ENCODE measurements at regions of chr21 and their contacts with region 1.

Region 1: DNA sequence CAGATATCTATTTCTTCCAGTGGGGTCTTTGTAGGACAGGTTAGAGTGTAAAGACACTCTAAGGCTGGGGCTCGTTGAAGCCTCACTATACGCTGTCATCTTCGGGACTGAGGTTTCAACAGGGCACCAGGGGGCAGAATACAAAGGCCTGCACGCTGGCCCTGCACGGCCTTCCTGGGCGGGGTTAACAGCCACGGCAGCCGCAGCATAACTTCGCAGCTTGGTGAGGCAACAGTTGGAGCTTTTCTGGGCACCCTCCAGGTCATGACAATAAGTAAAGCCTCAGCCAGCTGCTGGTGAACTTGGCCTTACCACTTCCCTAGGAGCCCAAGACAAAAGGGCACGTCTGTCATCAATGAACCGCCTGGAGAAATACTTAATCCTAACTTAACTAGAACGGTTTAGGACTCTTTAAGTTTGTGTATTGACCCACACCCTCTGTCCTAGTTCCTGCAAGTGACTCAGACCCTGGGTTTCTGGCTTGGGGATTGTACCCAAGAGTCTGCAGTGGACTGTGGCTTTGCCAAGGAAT is 2.3 kb upstream of the RUNX1 start:
- DNase-seq: peak; percentile 83
- ATAC-seq: peak; percentile 37
- H3K4me3 ChIP-seq: peak overlapping the region in 1 of 5 experiments; percentile 27
- H3K4me3 Mint-ChIP-seq: peak overlapping the region; percentile 82
- H3K27ac ChIP-seq: peak overlapping the region; percentile 51 to 69
- H3K27ac Mint-ChIP-seq: peak overlapping the region; percentile 96
- H3K4me1 ChIP-seq: peaks cover 33 to 39% of the 10 kb centered on the region in 2 donors
- H3K4me1 Mint-ChIP-seq: peaks cover 56% of the 10 kb centered on the region
- H3K27me3 ChIP-seq: no peaks in the 10 kb centered on the region
- H3K27me3 Mint-ChIP-seq: no peaks in the 10 kb centered on the region
- CTCF ChIP-seq: peak; percentile 62

Region 2: DNA sequence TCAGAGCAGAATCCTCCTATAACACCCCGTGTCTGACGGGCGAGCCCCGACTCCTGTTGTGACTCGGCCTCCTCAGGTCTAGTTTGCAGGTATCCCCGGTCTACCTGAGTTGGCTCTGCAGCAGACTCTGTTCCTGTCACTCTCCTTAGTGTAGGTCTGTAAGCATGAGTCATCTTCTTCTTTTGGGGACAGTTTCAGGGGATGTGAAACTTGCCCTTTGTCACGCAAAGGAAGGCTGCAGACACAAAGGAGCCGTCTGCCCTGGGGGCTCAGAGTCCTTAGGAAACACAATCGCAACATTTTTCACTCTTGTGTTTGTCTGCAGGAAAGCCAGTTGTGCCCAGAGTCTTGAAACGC is 185.4 kb before region 1 on chr21:
- CTCF ChIA-PET with region 1: interaction called, 4 read pairs
- POLR2A ChIA-PET with region 1: no interaction called
- intact Hi-C with region 1: loop called (anchors 1 kb)
- DNase-seq: peak; percentile 76
- ATAC-seq: peak; percentile 84
- H3K4me3 ChIP-seq: no peak overlapping the region
- H3K4me3 Mint-ChIP-seq: peak overlapping the region; percentile 69
- H3K27ac ChIP-seq: no peak overlapping the region
- H3K27ac Mint-ChIP-seq: peak overlapping the region; percentile 88
- H3K4me1 ChIP-seq: peaks cover 24 to 27% of the 10 kb centered on the region in 2 donors
- H3K4me1 Mint-ChIP-seq: peaks cover 31% of the 10 kb centered on the region
- H3K27me3 ChIP-seq: no peaks in the 10 kb centered on the region
- H3K27me3 Mint-ChIP-seq: no peaks in the 10 kb centered on the region
- CTCF ChIP-seq: no peak

Region 3: GRCh38 chr21:35026617-35027562 is 24.5 kb before region 1 on chr21:
- CTCF ChIA-PET with region 1: interaction called, 47 read pairs
- POLR2A ChIA-PET with region 1: interaction called, 19 read pairs
- intact Hi-C with region 1: loop called (anchors 1 kb)
- DNase-seq: peak; percentile 90
- ATAC-seq: peak; percentile 91
- H3K4me3 ChIP-seq: peak overlapping the region; percentile 11 to 65 (median 53)
- H3K4me3 Mint-ChIP-seq: peak overlapping the region; percentile 92
- H3K27ac ChIP-seq: peak overlapping the region; percentile 46 to 87
- H3K27ac Mint-ChIP-seq: peak overlapping the region; percentile 99
- H3K4me1 ChIP-seq: peaks cover 42 to 45% of the 10 kb centered on the region in 2 donors
- H3K4me1 Mint-ChIP-seq: peaks cover 63% of the 10 kb centered on the region
- H3K27me3 ChIP-seq: no peaks in the 10 kb centered on the region
- H3K27me3 Mint-ChIP-seq: no peaks in the 10 kb centered on the region
- CTCF ChIP-seq: no peak

Region 4: DNA sequence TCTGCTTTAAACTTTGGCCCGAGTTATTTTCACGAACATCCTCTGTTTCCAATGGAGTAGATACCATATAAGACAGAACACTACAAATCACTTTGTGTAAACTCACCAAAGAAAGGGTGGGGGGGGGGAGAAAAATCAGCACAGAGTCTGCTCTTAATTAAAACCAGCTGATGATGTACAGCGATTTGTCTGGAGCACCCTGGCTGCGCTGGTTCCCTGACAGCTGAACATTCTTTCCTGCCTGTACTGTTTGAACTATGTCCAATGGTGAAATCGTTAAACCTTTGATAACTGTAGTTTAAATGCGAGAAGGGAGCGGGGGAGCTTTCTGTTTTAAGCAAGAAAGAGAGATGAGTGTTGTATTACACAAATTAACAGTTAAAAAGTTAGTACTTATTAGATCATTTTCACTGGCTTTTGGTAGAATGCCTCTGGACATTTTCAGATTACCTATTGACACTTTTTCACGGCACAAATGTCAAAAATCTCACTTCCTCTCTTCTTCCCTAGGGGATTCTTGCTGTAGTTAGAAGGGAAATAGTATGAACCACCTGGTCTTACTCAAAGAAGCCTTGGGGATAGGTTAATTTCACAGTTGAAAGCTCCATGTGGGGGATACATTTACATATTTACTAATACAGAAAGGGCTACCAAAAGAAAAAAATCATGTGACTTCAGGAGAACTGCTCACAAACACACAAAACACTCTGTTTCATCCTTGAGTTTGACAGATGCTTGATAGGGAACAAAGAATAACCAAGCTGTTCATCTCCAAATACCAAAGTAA is 137.9 kb after region 1 on chr21:
- CTCF ChIA-PET with region 1: interaction called, 4 read pairs
- POLR2A ChIA-PET with region 1: no interaction called
- intact Hi-C with region 1: loop called (anchors 1 kb)
- DNase-seq: peak; percentile 81
- ATAC-seq: peak; percentile 95
- H3K4me3 ChIP-seq: peak overlapping the region in 1 of 5 experiments; percentile 36
- H3K4me3 Mint-ChIP-seq: peak overlapping the region; percentile 73
- H3K27ac ChIP-seq: no peak overlapping the region
- H3K27ac Mint-ChIP-seq: peak overlapping the region; percentile 54
- H3K4me1 ChIP-seq: peaks cover 18 to 19% of the 10 kb centered on the region in 2 donors
- H3K4me1 Mint-ChIP-seq: peaks cover 27% of the 10 kb centered on the region
- H3K27me3 ChIP-seq: no peaks in the 10 kb centered on the region
- H3K27me3 Mint-ChIP-seq: no peaks in the 10 kb centered on the region
- CTCF ChIP-seq: no peak

Region 5: GRCh38 chr21:35400233-35400957 is 349.0 kb after region 1 on chr21:
- CTCF ChIA-PET with region 1: interaction called, 45 read pairs
- POLR2A ChIA-PET with region 1: no interaction called
- intact Hi-C with region 1: loop called (anchors 1 kb)
- DNase-seq: peak; percentile 77
- ATAC-seq: peak; percentile 80
- H3K4me3 ChIP-seq: no peak overlapping the region
- H3K4me3 Mint-ChIP-seq: no peak overlapping the region
- H3K27ac ChIP-seq: no peak overlapping the region
- H3K27ac Mint-ChIP-seq: no peak overlapping the region
- H3K4me1 ChIP-seq: no peaks in the 10 kb centered on the region
- H3K4me1 Mint-ChIP-seq: peaks cover 2% of the 10 kb centered on the region
- H3K27me3 ChIP-seq: peaks cover 0 to 5% (median under 1%) of the 10 kb centered on the region in 4 experiments
- H3K27me3 Mint-ChIP-seq: peaks cover 4% of the 10 kb centered on the region
- CTCF ChIP-seq: peak; percentile 77

Region 6: DNA sequence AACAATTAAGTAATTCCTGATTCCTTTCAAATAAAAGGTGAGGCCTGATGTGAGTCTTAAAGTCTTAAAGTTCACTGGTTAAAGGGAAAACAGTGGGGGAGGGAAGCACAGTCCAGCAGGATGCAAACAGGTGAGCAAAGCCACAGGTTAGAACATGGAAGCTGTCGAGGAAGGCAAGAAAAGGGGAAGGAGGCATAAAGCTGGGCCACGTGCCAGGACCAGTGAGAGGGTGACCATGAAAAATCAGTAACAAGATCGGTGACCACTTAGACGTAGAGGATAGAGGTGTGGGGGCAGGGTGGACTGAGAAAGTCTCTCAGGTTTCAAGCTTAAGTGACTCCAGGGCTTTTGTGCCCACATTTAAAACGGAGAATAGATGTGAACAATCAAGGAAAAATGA is 777.7 kb after region 1 on chr21:
- CTCF ChIA-PET with region 1: no interaction called
- POLR2A ChIA-PET with region 1: no interaction called
- intact Hi-C with region 1: no loop called
- DNase-seq: no peak
- ATAC-seq: no peak
- H3K4me3 ChIP-seq: no peak overlapping the region
- H3K4me3 Mint-ChIP-seq: no peak overlapping the region
- H3K27ac ChIP-seq: no peak overlapping the region
- H3K27ac Mint-ChIP-seq: no peak overlapping the region
- H3K4me1 ChIP-seq: no peaks in the 10 kb centered on the region
- H3K4me1 Mint-ChIP-seq: no peaks in the 10 kb centered on the region
- H3K27me3 ChIP-seq: peaks cover 0 to 1% (median 0%) of the 10 kb centered on the region in 4 experiments
- H3K27me3 Mint-ChIP-seq: peaks cover 29% of the 10 kb centered on the region
- CTCF ChIP-seq: no peak

Measured in B cell (primary cell).